Activated CD4-positive, alpha-beta memory T cell treated with anti-CD3 and anti-CD28 coated beads for 36 hours (primary cell): ENCODE measurements at regions of chr6 and their contacts with region 1.

Region 1: GRCh38 chr6:141326426-141326825 is 806.3 kb upstream of the GJE1 start:
- DNase-seq: peak; percentile 75
- H3K4me3 Mint-ChIP-seq: no peak overlapping the region
- H3K27ac Mint-ChIP-seq: no peak overlapping the region
- H3K4me1 Mint-ChIP-seq: peaks cover 17% of the 10 kb centered on the region
- H3K27me3 Mint-ChIP-seq: no peaks in the 10 kb centered on the region

Region 2: GRCh38 chr6:141309295-141309694 is 17.1 kb before region 1 on chr6:
- CTCF ChIA-PET with region 1: no interaction called
- POLR2A ChIA-PET with region 1: no interaction called
- intact Hi-C with region 1: loop called (anchors 1 kb)
- DNase-seq: no peak
- H3K4me3 Mint-ChIP-seq: no peak overlapping the region
- H3K27ac Mint-ChIP-seq: no peak overlapping the region
- H3K4me1 Mint-ChIP-seq: peaks cover 7% of the 10 kb centered on the region
- H3K27me3 Mint-ChIP-seq: peaks cover 2% of the 10 kb centered on the region

Region 3: DNA sequence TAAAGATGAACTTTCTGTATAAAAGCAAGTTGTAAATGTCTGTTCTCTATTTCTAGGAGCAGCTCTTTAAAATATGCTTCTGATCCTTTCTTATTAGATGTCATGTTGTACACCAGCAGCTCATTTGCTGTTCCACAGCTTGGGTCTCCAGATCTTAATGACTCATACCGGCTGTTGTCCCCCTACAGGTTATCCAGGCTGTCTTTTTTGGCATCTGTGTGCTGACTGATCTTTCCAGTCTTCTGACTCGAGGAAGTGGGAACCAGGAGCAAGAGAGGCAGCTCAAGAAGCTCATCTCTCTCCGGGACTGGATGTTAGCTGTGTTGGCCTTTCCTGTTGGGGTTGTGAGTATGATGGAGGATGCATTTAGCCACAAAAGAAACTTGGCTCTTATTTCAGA is 1810.2 kb after region 1 on chr6:
- CTCF ChIA-PET with region 1: no interaction called
- POLR2A ChIA-PET with region 1: no interaction called
- intact Hi-C with region 1: loop called (anchors 10 kb)
- DNase-seq: no peak
- H3K4me3 Mint-ChIP-seq: peak overlapping the region; percentile 13
- H3K27ac Mint-ChIP-seq: peak overlapping the region; percentile 61
- H3K4me1 Mint-ChIP-seq: peaks cover 42% of the 10 kb centered on the region
- H3K27me3 Mint-ChIP-seq: no peaks in the 10 kb centered on the region